ENCODE measurements at regions of chr17 and their contacts with region 1.

Region 1: DNA sequence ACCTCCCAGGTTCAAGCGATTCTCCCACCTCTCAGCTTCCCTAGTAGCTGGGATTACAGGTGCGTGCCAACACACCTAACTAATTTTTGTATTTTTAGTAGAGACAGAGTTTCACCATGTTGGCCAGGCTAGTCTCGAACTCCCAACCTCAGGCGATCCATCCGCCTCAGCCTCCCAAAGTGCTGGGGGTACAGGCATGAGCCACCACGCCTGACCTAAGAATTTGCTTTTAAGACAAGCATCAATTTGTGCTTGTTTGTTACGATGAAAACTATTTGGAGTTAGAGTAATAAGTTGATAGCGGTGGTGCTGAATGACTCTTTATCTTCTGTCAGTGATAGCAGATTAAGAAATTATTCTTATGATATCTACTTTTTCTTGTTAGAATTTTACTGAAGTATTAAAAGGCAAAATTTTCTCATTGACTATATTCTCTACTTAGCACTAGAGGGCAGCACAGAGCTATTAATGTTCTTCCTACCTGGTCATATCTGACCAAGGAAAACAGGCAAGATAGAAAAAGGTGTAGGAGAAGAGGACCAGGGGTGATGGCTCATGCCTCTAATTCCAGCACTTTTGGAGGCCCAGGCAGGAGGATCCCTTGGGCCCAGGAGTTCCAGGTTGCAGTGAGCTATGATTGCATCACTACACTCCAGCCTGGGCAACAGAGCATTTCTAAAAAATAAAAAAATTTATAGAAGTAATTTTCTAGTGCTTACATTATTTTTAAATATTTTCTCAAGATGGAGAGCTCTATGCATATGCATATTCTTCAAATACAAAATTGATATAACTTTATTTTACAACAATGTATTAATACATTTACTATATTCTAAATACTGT is 24.5 kb downstream of the STXBP4 start:
- DNase-seq: peak; percentile 53
- ATAC-seq: peak; percentile 94
- H3K4me3 ChIP-seq: no peak overlapping the region
- H3K27ac ChIP-seq: no peak overlapping the region
- H3K4me1 ChIP-seq: no peaks in the 10 kb centered on the region
- H3K27me3 ChIP-seq: no peaks in the 10 kb centered on the region
- CTCF ChIP-seq: peak; percentile 56 to 85 (median 77)
- POLR2A ChIP-seq: no peak
- RAD21 ChIP-seq: peak; percentile 85

Region 2: DNA sequence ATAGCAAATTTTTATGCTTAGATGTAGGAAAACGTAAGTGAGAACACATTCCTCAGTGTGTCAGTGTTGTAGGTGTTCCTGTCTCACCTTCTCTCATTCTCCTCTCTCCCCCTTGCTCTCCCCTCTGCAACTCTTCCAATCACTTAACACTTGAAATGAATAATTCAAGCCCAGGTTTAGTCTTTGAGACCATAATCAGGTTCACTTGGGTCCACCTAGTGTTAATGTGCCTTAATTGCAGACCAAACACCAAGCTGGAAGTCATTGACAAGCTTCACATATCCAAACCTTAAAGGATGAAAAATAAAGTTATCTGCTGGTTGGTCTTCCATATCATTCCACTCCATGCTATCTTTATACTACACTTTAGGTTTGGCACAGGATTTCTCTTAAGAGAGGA is 12.5 kb after region 1 on chr17:
- CTCF ChIA-PET with region 1: interaction called, 70 read pairs
- POLR2A ChIA-PET with region 1: interaction called, 3 read pairs
- RAD21 ChIA-PET with region 1: interaction called in 1 of 2 experiments, 3 read pairs
- intact Hi-C with region 1: no loop called
- DNase-seq: peak; percentile 63
- ATAC-seq: peak; percentile 87
- H3K4me3 ChIP-seq: no peak overlapping the region
- H3K27ac ChIP-seq: no peak overlapping the region
- H3K4me1 ChIP-seq: no peaks in the 10 kb centered on the region
- H3K27me3 ChIP-seq: no peaks in the 10 kb centered on the region
- CTCF ChIP-seq: peak; percentile 16 to 80 (median 76); a peak in 4 of 6 replicates
- POLR2A ChIP-seq: no peak
- RAD21 ChIP-seq: peak; percentile 43

Region 3: DNA sequence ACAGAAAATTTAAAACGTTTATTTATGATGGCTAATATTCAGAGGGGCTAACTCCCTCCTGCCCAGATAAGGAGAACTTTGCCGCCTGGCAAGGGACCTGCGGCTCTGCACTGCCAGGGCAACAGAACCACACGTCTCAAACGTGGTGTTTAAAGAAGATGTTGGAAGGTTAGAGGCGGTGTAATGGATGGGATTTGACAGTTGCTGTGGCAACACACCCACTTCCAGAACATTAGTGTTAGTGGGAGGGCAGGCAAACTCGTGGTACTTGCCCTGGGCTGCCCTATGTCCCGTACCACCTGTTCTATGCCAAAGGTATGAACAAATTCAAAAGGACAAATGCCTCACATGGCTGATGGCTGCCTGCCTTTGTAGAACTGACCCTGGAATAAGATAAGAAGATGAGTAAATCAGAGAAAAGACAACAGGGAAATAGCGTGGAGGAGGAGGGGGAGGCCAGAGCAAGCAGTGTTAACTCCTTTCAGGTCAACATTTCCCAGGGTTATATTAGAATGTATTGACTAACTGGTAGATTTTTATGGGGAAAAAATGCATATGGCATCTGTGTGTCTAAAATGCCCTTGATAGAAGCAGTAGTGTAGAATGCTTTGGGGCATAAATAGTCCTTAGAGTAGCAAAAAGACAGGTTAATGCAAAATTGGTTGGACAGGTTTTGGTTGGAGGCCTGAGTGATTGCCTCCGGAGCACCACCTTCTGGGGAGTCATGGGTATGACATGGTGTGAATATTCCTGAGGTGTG is 302.6 kb after region 1 on chr17:
- CTCF ChIA-PET with region 1: interaction called, 18 read pairs
- POLR2A ChIA-PET with region 1: no interaction called
- RAD21 ChIA-PET with region 1: no interaction called
- intact Hi-C with region 1: loop called (anchors 1 kb)
- DNase-seq: peak; percentile 57
- ATAC-seq: peak; percentile 98
- H3K4me3 ChIP-seq: no peak overlapping the region
- H3K27ac ChIP-seq: no peak overlapping the region
- H3K4me1 ChIP-seq: no peaks in the 10 kb centered on the region
- H3K27me3 ChIP-seq: no peaks in the 10 kb centered on the region
- CTCF ChIP-seq: peak; percentile 72 to 93 (median 83)
- POLR2A ChIP-seq: no peak
- RAD21 ChIP-seq: peak; percentile 83

Region 4: GRCh38 chr17:55348749-55349354 is 355.8 kb after region 1 on chr17:
- CTCF ChIA-PET with region 1: interaction called, 67 read pairs
- POLR2A ChIA-PET with region 1: interaction called, 3 read pairs
- RAD21 ChIA-PET with region 1: interaction called in 1 of 2 experiments, 4 read pairs
- intact Hi-C with region 1: loop called (anchors 1 kb)
- DNase-seq: peak; percentile 42
- ATAC-seq: peak; percentile 91
- H3K4me3 ChIP-seq: no peak overlapping the region
- H3K27ac ChIP-seq: no peak overlapping the region
- H3K4me1 ChIP-seq: no peaks in the 10 kb centered on the region
- H3K27me3 ChIP-seq: no peaks in the 10 kb centered on the region
- CTCF ChIP-seq: peak; percentile 82 to 98 (median 91)
- POLR2A ChIP-seq: no peak
- RAD21 ChIP-seq: peak; percentile 85

Region 5: DNA sequence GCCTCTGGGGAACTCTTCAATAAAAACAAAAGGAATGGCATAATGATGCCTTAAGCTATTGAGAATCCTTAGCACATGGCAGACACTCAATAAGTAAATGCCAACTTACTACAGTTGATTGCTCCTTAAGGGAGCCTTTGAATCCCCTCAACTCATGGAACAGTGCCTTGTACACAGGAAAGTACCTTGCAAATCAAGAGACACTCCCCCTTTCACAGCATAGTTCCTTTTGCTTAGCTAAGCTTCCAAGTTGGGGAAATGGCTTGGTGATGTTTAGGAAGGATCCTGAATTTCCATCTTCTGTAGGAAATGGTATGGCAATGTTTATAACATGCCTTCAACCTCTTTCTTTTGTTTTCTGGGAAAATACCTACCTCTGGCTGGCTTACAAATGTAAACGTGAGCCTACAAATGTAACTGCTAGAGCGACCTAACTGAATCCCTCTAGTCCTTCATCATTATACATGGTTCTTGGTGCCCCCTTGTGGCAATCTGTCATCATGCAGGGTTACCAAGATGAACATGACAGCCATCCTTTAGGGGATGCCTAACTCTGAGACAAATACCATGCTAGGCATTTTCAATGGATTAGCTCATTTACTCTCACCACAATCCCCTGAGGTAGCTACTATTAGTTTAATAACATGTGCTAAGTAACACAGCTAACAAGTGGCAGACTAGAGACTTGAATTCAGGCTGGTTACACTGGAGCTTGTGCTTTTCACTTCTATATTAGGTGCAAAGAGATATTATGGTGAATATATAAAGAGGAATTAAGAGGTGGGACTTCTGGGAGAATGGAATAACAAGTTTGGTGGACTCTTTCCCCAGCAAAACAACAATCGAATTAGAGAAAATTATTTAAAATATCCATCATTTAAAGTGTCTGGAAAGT is 363.7 kb after region 1 on chr17:
- CTCF ChIA-PET with region 1: interaction called, 51 read pairs
- POLR2A ChIA-PET with region 1: no interaction called
- RAD21 ChIA-PET with region 1: interaction called in 1 of 2 experiments, 6 read pairs
- intact Hi-C with region 1: loop called (anchors 1 kb)
- DNase-seq: peak; percentile 84
- ATAC-seq: peak; percentile 100
- H3K4me3 ChIP-seq: no peak overlapping the region
- H3K27ac ChIP-seq: no peak overlapping the region
- H3K4me1 ChIP-seq: peaks cover 0 to 4% of the 10 kb centered on the region in 2 experiments; a peak in 1 of 4 replicates
- H3K27me3 ChIP-seq: no peaks in the 10 kb centered on the region
- CTCF ChIP-seq: peak; percentile 74 to 99 (median 93)
- POLR2A ChIP-seq: no peak
- RAD21 ChIP-seq: peak; percentile 83

Region 6: GRCh38 chr17:55513885-55514591 is 521.0 kb after region 1 on chr17:
- CTCF ChIA-PET with region 1: interaction called, 14 read pairs
- POLR2A ChIA-PET with region 1: no interaction called
- RAD21 ChIA-PET with region 1: no interaction called
- intact Hi-C with region 1: loop called (anchors 1 kb)
- DNase-seq: peak; percentile 70
- ATAC-seq: peak; percentile 96
- H3K4me3 ChIP-seq: no peak overlapping the region
- H3K27ac ChIP-seq: no peak overlapping the region
- H3K4me1 ChIP-seq: 0 out of 4 replicates have a peak, but pooled peaks cover 0 to 4% of the 10 kb centered on the region in 2 experiments
- H3K27me3 ChIP-seq: peaks cover 45% of the 10 kb centered on the region
- CTCF ChIP-seq: peak; percentile 91 to 99 (median 98)
- POLR2A ChIP-seq: no peak
- RAD21 ChIP-seq: peak; percentile 96

Measured in HCT116 (cell line).